Activated CD4-positive, alpha-beta memory T cell treated with anti-CD3 and anti-CD28 coated beads, Interleukin-2, amount 10 ng/mL, durations not matched to agents 7 days and 5 days (primary cell): ENCODE measurements at regions of chr1 and their contacts with region 1.

Region 1: DNA sequence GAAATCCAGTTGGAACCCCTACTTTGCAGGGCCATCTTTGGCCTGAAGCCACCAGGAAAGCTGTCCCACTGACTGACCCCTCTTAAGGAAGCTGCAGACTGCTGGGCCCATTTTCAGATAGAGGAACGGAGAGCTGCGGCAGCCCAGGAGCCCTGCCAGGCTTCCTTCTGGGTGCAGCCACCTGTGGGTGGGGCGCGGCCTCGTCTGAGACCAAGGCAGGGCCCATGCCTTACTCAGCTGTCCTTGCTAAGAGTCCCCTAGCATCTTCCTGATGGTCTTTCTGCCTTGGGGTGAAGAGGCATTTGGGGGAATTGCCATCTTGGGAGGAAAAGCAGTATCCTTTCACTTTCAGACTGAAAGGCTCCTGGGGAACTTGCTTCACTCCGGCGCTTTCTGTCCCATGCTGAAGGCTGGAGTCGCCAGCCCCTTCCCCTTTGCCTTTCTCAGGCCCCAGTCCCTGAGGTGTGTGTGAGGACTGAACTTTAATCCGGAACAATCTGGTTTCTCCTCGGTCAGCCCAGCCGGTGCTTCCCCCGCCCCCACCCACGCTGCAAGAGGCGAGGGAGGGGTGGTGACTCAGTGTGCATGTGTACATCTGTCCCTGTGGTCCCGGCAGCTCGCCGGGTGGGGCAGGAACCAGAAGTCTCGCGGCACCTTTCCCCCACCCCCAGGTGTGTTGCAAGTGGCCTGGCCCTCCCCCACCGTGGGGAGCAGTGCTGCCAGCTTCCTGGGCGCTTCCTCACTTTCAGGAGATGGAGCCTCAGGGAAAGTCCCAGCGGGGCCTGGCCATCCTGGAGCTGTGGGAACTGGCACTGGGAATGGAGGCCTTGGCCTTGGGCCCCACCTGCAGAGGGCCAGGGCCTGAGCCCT is 5.1 kb downstream of the ZC3H12A start:
- DNase-seq: peak; percentile 91
- H3K4me3 Mint-ChIP-seq: peak overlapping the region; percentile 98
- H3K27ac Mint-ChIP-seq: peak overlapping the region; percentile 99
- H3K4me1 Mint-ChIP-seq: peaks cover 50% of the 10 kb centered on the region
- H3K27me3 Mint-ChIP-seq: no peaks in the 10 kb centered on the region

Region 2: GRCh38 chr1:37449936-37450335 is 29.6 kb before region 1 on chr1:
- CTCF ChIA-PET with region 1: interaction called, 14 read pairs
- POLR2A ChIA-PET with region 1: interaction called, 6 read pairs
- DNase-seq: peak; percentile 27
- H3K4me3 Mint-ChIP-seq: no peak overlapping the region
- H3K27ac Mint-ChIP-seq: no peak overlapping the region
- H3K4me1 Mint-ChIP-seq: peaks cover 13% of the 10 kb centered on the region
- H3K27me3 Mint-ChIP-seq: peaks cover 6% of the 10 kb centered on the region

Region 3: GRCh38 chr1:37465593-37466517 is 13.6 kb before region 1 on chr1:
- CTCF ChIA-PET with region 1: interaction called, 64 read pairs
- POLR2A ChIA-PET with region 1: interaction called, 12 read pairs
- DNase-seq: no peak
- H3K4me3 Mint-ChIP-seq: no peak overlapping the region
- H3K27ac Mint-ChIP-seq: no peak overlapping the region
- H3K4me1 Mint-ChIP-seq: peaks cover 12% of the 10 kb centered on the region
- H3K27me3 Mint-ChIP-seq: no peaks in the 10 kb centered on the region

Region 4: DNA sequence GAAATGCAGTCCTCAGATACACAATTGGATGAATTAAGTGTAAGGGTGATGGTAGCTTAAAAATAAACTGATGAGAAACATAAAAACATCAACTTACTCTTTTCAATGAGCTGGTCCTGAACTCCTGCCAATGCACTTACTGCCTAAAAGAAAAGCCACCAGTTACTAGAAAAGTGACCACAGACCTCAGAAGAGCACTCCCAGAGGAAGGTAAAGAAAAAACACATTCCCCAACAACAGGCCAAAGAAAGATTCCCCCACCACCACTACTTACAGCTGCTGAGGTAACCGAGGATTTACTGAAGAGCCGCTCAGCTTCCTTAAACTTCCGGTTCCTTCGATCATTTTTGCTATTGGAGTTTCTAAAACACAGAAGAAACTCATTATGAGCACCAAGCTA is 29.7 kb after region 1 on chr1:
- CTCF ChIA-PET with region 1: interaction called, 22 read pairs
- POLR2A ChIA-PET with region 1: interaction called, 45 read pairs
- DNase-seq: no peak
- H3K4me3 Mint-ChIP-seq: no peak overlapping the region
- H3K27ac Mint-ChIP-seq: no peak overlapping the region
- H3K4me1 Mint-ChIP-seq: peaks cover 38% of the 10 kb centered on the region
- H3K27me3 Mint-ChIP-seq: no peaks in the 10 kb centered on the region

Region 5: GRCh38 chr1:37514350-37515184 is 35.1 kb after region 1 on chr1 and contains the start of gene MEAF6:
- CTCF ChIA-PET with region 1: interaction called, 22 read pairs
- POLR2A ChIA-PET with region 1: interaction called, 45 read pairs
- DNase-seq: peak; percentile 87
- H3K4me3 Mint-ChIP-seq: peak within 1 kb of the TSS; percentile 94
- H3K27ac Mint-ChIP-seq: peak within 1 kb of the TSS; percentile 83
- H3K4me1 Mint-ChIP-seq: peaks cover 38% of the 10 kb centered on the region
- H3K27me3 Mint-ChIP-seq: no peaks in the 10 kb centered on the region
- total RNA-seq, gene MEAF6: 63.7 to 64.2 TPM

Region 6: DNA sequence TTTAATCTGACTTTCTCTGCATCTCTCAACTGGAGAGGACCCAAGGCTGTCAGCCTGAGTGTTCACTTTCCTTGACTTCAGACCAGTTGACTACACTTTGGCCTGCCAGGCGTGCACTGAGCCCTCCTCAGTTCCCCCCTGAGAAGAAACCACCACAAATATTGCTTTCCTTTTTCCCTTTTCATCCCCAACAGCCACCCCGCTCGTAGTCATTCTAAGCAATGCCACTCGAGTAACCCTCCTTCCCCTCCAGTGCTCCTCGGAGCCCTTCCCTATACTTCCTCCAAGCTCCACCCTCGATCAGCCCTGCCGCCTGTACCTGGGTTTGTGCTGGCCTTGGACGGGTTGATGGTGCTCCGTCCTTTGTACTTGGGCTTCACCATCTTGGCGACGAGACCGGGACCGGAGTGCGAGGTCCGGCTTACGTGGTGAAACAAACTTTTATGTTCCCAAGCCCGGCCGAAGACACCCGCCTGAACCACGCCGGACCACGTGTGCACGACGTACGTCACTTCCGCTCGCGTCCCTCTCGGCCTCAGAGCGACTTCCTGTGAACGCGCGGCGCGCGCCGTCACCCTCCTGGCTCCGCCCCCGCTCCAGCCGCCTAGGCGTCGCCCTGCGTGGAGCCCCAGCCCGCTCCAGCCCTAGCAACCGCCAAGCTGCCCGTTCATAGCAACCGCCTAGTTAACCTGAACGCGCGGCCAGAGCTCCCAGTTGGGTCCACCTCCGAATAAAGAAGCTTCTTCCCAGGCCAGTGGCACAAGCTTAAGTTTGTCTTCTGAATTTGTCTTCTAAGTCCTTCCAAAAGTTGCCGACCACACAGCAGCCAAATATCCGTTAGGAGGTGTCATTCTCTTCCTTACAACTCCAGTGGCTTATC is 116.2 kb after region 1 on chr1 and contains the start of gene GNL2:
- CTCF ChIA-PET with region 1: no interaction called
- POLR2A ChIA-PET with region 1: interaction called, 10 read pairs
- DNase-seq: peak; percentile 97
- H3K4me3 Mint-ChIP-seq: peak within 1 kb of the TSS; percentile 94
- H3K27ac Mint-ChIP-seq: peak within 1 kb of the TSS; percentile 90
- H3K4me1 Mint-ChIP-seq: peaks cover 38% of the 10 kb centered on the region
- H3K27me3 Mint-ChIP-seq: peaks cover 3% of the 10 kb centered on the region
- total RNA-seq, gene GNL2: 50.6 to 52.8 TPM